Mammary epithelial cell (primary cell): ENCODE measurements at regions of chr10 and their contacts with region 1.

Region 1: DNA sequence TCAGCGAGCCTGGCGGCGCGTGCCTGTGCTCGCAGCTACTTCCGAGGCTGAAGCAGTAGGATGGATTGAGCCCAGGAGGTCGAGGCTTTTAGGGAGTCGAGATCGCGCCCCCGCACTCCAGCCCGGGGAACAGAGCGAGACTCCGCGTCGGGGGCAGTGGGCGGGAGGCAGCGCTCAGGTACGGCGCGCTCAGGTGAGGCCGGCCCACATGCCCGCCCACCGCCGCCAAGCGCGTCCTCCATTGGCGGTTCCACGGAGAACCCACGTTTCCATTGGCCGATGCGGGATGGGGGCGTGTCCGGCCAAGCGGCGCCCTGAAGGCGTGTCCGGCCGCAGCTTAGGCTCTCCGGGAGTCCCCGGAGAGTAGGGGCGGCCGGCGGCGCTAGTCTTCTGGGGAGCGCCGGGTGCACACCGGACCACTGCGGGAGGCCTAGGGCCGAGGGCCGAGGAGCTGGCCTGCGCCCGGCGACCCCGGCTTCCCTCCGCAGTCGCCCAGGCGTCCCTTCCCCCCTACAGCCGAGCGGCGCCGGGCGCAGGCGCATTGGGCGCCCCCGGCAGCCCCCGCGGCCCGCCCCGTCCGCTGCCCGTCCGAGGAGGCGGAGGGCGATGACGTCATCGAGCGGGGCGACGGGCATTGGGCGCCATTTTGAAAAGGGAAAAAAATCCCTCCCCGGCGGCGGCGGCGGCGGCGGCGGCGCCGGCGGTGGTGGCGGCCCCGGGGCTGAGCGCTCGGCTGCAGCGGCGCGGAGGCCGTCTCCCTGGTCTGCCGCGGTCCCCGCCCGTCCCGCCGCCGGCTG is at the start of gene PPP2R2D:
- DNase-seq: peak; percentile 95
- H3K4me3 ChIP-seq: peak within 1 kb of the TSS; percentile 78 to 95 (median 91)
- H3K27ac ChIP-seq: peak within 1 kb of the TSS; percentile 93
- H3K4me1 ChIP-seq: peaks cover 30% of the 10 kb centered on the region
- H3K27me3 ChIP-seq: no peaks in the 10 kb centered on the region
- CTCF ChIP-seq: no peak
- total RNA-seq, gene PPP2R2D: 33.7 to 36.5 TPM

Region 2: GRCh38 chr10:131943021-131943814 is 42.7 kb after region 1 on chr10:
- CTCF ChIA-PET with region 1: no interaction called
- dilution Hi-C with region 1: no loop called
- in situ Hi-C with region 1: no loop called
- intact Hi-C with region 1: loop called (anchors 5 kb)
- DNase-seq: no peak
- H3K4me3 ChIP-seq: no peak overlapping the region
- H3K27ac ChIP-seq: no peak overlapping the region
- H3K4me1 ChIP-seq: peaks cover 16% of the 10 kb centered on the region
- H3K27me3 ChIP-seq: no peaks in the 10 kb centered on the region
- CTCF ChIP-seq: peak; percentile 39 to 61

Region 3: DNA sequence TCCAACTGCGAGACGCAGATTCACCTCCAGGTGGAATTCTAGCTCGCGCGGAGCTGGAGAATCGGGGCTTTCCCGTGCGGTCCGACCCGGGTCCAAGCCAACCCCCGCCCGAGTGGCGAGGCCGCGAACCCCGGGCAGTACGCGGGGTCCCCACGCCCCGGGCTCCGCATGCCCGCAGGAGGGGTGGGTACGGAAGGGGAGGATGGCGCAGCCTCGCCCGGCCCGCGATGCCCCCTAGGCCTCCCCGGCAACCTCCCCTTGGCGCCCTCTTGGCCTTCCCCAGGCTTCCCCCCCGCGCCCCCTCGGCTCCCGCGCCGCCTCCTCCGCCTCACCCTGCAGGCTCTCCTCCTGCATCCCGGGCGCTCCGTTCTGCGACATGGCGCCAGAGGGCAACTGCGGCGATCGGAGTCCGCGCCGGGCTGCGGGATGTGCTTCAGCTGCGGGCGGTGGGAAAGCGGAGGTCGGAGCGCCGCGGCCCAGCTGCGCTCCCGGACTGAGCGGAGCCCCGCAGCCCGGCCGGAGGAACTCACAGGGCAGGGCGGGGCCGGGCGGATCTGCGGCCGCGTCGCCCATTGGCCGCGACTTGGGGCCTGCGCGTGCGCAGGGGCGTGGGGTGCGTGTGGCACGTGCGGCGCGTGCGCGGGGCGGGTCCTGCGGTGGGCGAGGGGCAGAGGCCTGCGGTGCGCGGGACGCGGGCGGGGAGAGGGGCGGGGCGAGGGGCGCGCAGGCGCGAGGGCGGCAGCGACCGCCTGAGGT is 81.1 kb after region 1 on chr10 and contains the start of gene BNIP3:
- CTCF ChIA-PET with region 1: no interaction called
- dilution Hi-C with region 1: loop called (anchors 5 kb)
- in situ Hi-C with region 1: no loop called
- intact Hi-C with region 1: loop called (anchors 5 kb)
- DNase-seq: peak; percentile 89
- H3K4me3 ChIP-seq: peak within 1 kb of the TSS; percentile 58 to 90 (median 79)
- H3K27ac ChIP-seq: peak within 1 kb of the TSS; percentile 64
- H3K4me1 ChIP-seq: peaks cover 14% of the 10 kb centered on the region
- H3K27me3 ChIP-seq: no peaks in the 10 kb centered on the region
- CTCF ChIP-seq: peak in 1 of 2 donors; percentile 26
- total RNA-seq, gene BNIP3: 50.8 to 65.2 TPM

Region 4: GRCh38 chr10:132023092-132023811 is 122.7 kb after region 1 on chr10:
- CTCF ChIA-PET with region 1: no interaction called
- dilution Hi-C with region 1: no loop called
- in situ Hi-C with region 1: no loop called
- intact Hi-C with region 1: loop called (anchors 5 kb)
- DNase-seq: peak; percentile 52
- H3K4me3 ChIP-seq: peak overlapping the region; percentile 2 to 34 (median 32)
- H3K27ac ChIP-seq: no peak overlapping the region
- H3K4me1 ChIP-seq: peaks cover 4% of the 10 kb centered on the region
- H3K27me3 ChIP-seq: no peaks in the 10 kb centered on the region
- CTCF ChIP-seq: peak; percentile 69 to 92

Region 5: GRCh38 chr10:132142411-132143161 is 242.0 kb after region 1 on chr10:
- CTCF ChIA-PET with region 1: no interaction called
- dilution Hi-C with region 1: no loop called
- in situ Hi-C with region 1: no loop called
- intact Hi-C with region 1: loop called (anchors 5 kb)
- DNase-seq: peak; percentile 8
- H3K4me3 ChIP-seq: no peak overlapping the region
- H3K27ac ChIP-seq: no peak overlapping the region
- H3K4me1 ChIP-seq: no peaks in the 10 kb centered on the region
- H3K27me3 ChIP-seq: no peaks in the 10 kb centered on the region
- CTCF ChIP-seq: peak; percentile 70 to 83